Posterior cingulate gyrus (tissue), 11 donors: ENCODE measurements at regions of chr13 and their contacts with region 1.

Region 1: GRCh38 chr13:22964245-22964966 is 216.4 kb upstream of the SGCG start:
- DNase-seq: no peak

Region 2: GRCh38 chr13:22648320-22648801 is 316.0 kb before region 1 on chr13:
- intact Hi-C with region 1: no loop called
- DNase-seq: no peak

Region 3: DNA sequence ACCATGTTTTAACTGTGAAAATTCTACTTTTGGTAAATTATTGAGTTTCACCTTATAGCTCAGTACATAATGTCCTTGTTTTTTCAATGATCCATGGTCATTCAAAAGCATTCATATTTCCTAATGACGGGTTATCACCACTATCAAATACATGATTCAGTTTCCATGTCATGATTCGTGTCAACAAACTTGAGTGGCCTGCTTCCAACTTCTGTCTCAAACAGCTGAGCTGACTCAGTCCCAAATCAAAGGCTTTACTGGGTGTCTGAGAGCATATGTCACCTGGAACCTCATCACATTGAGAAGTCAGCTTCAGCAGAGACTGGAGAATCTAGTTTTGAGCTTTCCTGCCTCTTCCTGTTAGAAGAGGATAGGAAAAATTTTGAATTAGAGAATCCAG is 176.1 kb after region 1 on chr13:
- intact Hi-C with region 1: no loop called
- DNase-seq: no peak

Region 4: GRCh38 chr13:24386816-24387719 is 1422.7 kb after region 1 on chr13:
- intact Hi-C with region 1: loop called (anchors 5 kb)
- DNase-seq: no peak